Upper lobe of right lung (tissue), 1 donor: ENCODE measurements at regions of chr16 and their contacts with region 1.

Region 1: DNA sequence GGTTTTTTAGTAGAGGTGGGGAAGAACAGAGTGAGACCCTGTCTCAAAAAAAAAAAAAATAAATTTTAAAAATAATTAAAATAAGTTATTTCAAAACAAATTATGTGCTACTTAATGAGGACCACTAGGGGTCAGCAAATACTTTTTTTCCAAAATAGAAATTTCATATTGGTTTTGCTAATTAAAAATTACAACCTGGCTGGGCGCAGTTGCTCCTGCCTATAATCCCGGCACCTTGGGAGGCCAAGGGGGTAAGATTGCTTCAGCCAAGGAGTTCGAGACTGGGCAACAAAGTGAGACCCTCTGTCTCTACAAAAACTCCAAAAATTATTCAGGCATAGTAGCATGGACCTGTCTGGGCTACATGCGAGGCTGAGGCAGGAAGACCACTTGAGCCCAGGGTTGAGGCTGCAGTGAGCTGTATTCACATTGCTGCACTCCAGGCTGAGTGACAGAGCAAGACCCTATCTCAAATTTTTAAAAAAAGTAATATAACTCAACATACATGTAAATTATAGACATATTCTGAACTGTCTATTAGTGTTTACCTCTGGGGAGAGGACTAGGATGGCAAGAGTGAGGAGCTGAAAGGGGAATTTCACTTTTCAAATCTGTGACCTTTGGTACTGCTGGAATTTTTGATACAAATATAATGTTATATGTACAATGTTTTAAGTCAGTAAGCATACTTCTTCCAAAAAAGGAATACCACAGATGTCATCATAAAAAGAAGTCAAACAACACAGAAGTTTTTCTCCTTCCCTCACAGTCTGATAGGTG is 8.1 kb downstream of the MEIOB start:
- DNase-seq: no peak
- ATAC-seq: no peak
- H3K4me3 ChIP-seq: no peak overlapping the region
- H3K27ac ChIP-seq: no peak overlapping the region
- H3K4me1 ChIP-seq: no peaks in the 10 kb centered on the region
- H3K27me3 ChIP-seq: peaks cover 22% of the 10 kb centered on the region
- CTCF ChIP-seq: peak; percentile 67

Region 2: GRCh38 chr16:1543085-1543896 is 320.6 kb before region 1 on chr16:
- intact Hi-C with region 1: no loop called
- DNase-seq: peak; percentile 82
- ATAC-seq: peak; percentile 76
- H3K4me3 ChIP-seq: peak overlapping the region; percentile 1
- H3K27ac ChIP-seq: peak overlapping the region; percentile 80
- H3K4me1 ChIP-seq: peaks cover 59% of the 10 kb centered on the region
- H3K27me3 ChIP-seq: no peaks in the 10 kb centered on the region
- CTCF ChIP-seq: peak; percentile 5

Region 3: GRCh38 chr16:1929578-1930337 is 65.9 kb after region 1 on chr16:
- intact Hi-C with region 1: loop called (anchors 10 kb)
- DNase-seq: peak; percentile 95
- ATAC-seq: peak; percentile 99
- H3K4me3 ChIP-seq: peak overlapping the region; percentile 66
- H3K27ac ChIP-seq: peak overlapping the region; percentile 77
- H3K4me1 ChIP-seq: no peaks in the 10 kb centered on the region
- H3K27me3 ChIP-seq: peaks cover 1% of the 10 kb centered on the region
- CTCF ChIP-seq: peak; percentile 95